PC-9 (cell line): ENCODE measurements at regions of chr12 and their contacts with region 1.

Region 1: DNA sequence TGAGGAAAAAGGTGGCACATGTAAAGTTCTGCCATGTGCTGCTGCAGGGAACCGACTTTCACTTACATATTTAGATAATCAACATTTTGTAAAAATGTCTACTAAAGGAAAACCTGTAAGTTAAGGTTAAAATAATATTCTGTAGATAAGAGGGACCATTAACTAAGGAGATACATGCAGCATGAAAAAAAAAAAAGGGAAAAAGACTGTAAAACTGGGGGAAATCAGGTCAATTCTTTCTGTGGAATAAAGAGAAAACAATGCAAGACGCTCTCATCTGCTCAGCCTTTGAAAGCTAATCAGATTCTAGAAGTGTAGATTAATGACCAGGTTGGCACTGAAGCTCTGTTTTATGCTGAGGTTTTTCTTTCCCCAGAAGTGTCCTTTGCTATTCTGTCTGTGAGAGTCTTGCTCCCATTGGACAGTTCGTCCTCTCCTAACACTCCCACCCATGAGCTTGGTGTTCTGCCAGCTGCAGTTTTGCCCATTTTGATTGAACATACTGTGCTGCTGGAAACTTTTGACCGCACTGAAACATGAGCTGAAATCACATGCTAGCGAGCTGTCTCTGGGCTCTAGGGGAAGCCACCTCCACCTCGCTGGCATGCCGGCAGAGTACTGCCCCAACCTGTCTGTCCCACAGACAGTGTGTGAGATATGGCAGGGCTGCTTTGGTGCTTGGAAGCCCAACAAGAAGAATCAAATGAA is 39.7 kb downstream of the PPTC7 start:
- DNase-seq: no peak
- H3K4me3 ChIP-seq: no peak overlapping the region
- H3K27ac ChIP-seq: no peak overlapping the region
- H3K4me1 ChIP-seq: peaks cover 13% of the 10 kb centered on the region
- H3K27me3 ChIP-seq: no peaks in the 10 kb centered on the region
- CTCF ChIP-seq: no peak

Region 2: DNA sequence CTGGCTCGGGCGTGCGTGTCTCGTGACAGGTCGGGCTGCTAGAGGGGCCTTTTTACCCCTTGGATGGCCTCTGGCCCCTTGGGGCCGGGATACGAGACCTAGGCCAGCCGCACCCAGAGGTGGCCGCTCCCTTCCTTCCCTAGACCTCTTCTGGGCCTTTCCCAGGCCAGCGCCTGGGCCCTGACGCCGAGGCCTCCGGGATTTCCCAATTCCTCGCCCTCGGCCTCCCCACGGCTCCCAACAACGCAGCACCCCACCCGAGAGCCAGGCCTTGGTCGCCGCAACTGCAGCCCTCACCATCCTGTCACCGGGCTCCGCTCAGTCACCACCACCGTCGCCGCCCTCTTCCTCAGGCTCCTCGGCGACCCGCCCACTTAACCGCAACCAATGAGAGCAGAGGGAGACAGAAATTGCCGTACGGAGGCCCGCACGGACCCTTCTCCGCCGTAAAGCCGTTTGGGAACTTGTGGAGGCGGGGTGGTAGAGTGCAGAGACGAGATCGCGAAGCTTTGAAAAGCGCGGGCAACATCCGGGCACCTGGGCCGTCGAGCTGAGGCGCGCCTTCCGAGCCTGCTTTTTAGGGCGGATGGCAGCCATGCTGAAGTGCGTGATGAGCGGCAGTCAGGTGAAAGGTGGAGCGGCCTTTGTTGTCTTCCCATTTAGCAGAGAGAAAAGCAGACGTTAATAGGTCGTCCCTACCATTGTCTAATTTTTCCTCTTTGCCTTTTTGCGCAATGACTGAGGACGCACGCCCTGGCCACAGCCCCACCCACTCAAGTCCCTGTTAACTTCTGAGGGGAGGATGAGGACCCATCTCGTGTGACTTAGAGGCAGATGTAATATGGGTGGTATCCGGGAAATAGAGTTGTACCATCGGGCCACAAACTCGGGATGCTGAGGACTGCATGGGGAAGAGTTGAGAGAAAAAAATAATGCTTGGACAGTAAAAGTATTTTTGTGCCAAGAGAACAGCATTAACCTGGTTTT is 41.4 kb before region 1 on chr12 and contains the starts of genes RAD9B and VPS29:
- CTCF ChIA-PET with region 1: interaction called, 3 read pairs
- POLR2A ChIA-PET with region 1: no interaction called
- intact Hi-C with region 1: loop called (anchors 5 kb)
- DNase-seq: peak; percentile 95 to 96
- H3K4me3 ChIP-seq: peak within 1 kb of the TSS; percentile 79
- H3K27ac ChIP-seq: peak within 1 kb of the TSS; percentile 85
- H3K4me1 ChIP-seq: peaks cover 22% of the 10 kb centered on the region
- H3K27me3 ChIP-seq: no peaks in the 10 kb centered on the region
- CTCF ChIP-seq: no peak
- total RNA-seq, gene RAD9B: 1.6 and 2.3 TPM in 2 replicates
- total RNA-seq, gene VPS29: 78.3 and 114 TPM in 2 replicates

Region 3: DNA sequence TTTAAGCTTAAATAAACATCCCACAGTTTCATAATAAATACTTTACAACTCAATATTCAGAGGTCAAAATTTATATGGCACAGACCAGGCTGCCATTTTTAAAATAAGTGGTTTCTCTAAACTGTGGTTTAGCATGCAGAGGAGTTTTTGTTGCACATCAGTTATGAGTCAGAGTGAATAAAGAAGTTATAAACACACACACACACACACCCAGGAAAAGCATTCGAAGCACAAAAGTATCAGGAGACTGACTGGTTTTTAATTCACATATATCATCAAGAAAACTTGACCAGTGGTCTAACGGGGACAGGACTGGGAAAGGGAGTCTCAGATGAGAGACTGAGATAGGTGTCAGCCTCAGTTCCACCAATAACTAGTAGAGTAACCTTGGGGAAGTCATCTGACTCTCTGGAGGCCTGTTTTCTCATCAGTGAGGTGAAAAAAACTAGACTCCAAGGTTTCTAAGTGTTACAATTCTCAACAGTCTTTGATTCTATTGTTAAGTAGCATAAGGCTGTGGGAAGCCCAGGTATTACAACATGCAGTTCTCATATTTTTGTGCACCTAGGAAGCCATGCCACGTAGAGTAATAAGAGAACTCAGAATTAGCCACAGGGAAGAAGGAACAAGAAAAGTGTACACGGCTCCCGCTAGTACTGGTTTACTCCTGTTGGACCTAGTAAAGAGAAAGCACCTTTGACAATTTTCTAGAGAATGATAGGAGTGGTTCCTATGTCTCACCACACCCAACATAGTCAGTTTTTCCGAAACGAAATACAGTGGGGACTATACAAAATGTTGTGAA is 34.5 kb after region 1 on chr12:
- CTCF ChIA-PET with region 1: interaction called, 6 read pairs
- POLR2A ChIA-PET with region 1: interaction called, 10 read pairs
- intact Hi-C with region 1: no loop called
- DNase-seq: peak; percentile 40 to 90
- H3K4me3 ChIP-seq: peak overlapping the region; percentile 43; the same call in 1 of the 2 replicates
- H3K27ac ChIP-seq: peak overlapping the region; percentile 98
- H3K4me1 ChIP-seq: peaks cover 71% of the 10 kb centered on the region
- H3K27me3 ChIP-seq: no peaks in the 10 kb centered on the region
- CTCF ChIP-seq: no peak

Region 4: GRCh38 chr12:110583137-110584059 is 40.0 kb after region 1 on chr12 and contains the start of gene PPTC7:
- CTCF ChIA-PET with region 1: interaction called, 6 read pairs
- POLR2A ChIA-PET with region 1: no interaction called
- intact Hi-C with region 1: loop called (anchors 2 kb)
- DNase-seq: peak; percentile 84 to 90
- H3K4me3 ChIP-seq: peak within 1 kb of the TSS; percentile 85
- H3K27ac ChIP-seq: peak within 1 kb of the TSS; percentile 80
- H3K4me1 ChIP-seq: peaks cover 67% of the 10 kb centered on the region
- H3K27me3 ChIP-seq: no peaks in the 10 kb centered on the region
- CTCF ChIP-seq: no peak
- total RNA-seq, gene PPTC7: 16.0 and 18.3 TPM in 2 replicates

Region 5: DNA sequence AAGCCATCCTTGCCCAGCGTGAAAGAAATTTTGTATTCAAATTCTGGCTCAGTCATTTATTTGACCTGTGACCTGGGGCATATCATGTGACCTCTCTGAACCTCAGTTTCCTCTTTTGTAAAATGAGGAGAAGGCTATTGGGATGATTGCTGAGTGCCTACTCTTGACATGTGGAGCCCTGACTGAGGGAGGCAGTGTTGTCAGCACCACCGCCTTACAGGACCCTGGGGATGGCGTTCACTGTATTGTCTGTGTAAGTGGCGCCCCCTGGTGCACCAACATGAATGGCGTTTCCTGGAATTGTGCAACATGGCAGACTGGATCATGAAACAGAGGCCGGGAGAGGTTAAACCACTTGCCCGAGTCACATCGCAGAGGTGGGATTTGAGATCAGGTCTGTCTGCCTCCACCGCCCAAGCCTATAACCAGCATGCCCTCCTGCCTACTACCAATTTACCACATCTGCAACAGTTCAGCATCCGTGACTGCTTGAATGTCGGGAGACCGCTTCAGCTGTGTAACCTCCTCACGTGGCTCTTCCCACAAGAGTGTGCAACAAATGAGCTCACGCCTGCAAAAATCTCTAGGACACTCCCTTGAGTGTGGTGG is 283.3 kb after region 1 on chr12:
- CTCF ChIA-PET with region 1: no interaction called
- POLR2A ChIA-PET with region 1: no interaction called
- intact Hi-C with region 1: no loop called
- DNase-seq: peak; percentile 63 to 87
- H3K4me3 ChIP-seq: no peak overlapping the region
- H3K27ac ChIP-seq: no peak overlapping the region
- H3K4me1 ChIP-seq: no peaks in the 10 kb centered on the region
- H3K27me3 ChIP-seq: no peaks in the 10 kb centered on the region; the same call in 1 of the 2 replicates
- CTCF ChIP-seq: peak; percentile 93